T-cell (primary cell): ENCODE measurements at regions of chr9 and their contacts with region 1.

Region 1: GRCh38 chr9:15182101-15182551 is 124.9 kb downstream of the TTC39B start:
- DNase-seq: no peak
- ATAC-seq: no peak
- H3K4me3 ChIP-seq: no peak overlapping the region
- H3K4me3 Mint-ChIP-seq: no peak overlapping the region
- H3K27ac ChIP-seq: no peak overlapping the region
- H3K27ac Mint-ChIP-seq: no peak overlapping the region
- H3K4me1 ChIP-seq: no peaks in the 10 kb centered on the region
- H3K4me1 Mint-ChIP-seq: no peaks in the 10 kb centered on the region
- H3K27me3 ChIP-seq: no peaks in the 10 kb centered on the region
- H3K27me3 Mint-ChIP-seq: no peaks in the 10 kb centered on the region

Region 2: GRCh38 chr9:15377625-15378540 is 195.8 kb after region 1 on chr9:
- CTCF ChIA-PET with region 1: interaction called in 1 of 2 experiments, 11 read pairs
- POLR2A ChIA-PET with region 1: no interaction called
- DNase-seq: no peak
- ATAC-seq: no peak
- H3K4me3 ChIP-seq: no peak overlapping the region
- H3K4me3 Mint-ChIP-seq: no peak overlapping the region
- H3K27ac ChIP-seq: no peak overlapping the region
- H3K27ac Mint-ChIP-seq: no peak overlapping the region
- H3K4me1 ChIP-seq: no peaks in the 10 kb centered on the region
- H3K4me1 Mint-ChIP-seq: no peaks in the 10 kb centered on the region
- H3K27me3 ChIP-seq: peaks cover 0 to 15% of the 10 kb centered on the region in 2 experiments
- H3K27me3 Mint-ChIP-seq: peaks cover 6 to 14% of the 10 kb centered on the region in 2 donors